ENCODE measurements at regions of chr9 and their contacts with region 1.

Region 1: GRCh38 chr9:5582835-5583195 is 46.1 kb upstream of the RIC1 start:
- DNase-seq: no peak
- H3K4me3 ChIP-seq: no peak overlapping the region
- H3K27ac ChIP-seq: no peak overlapping the region
- H3K4me1 ChIP-seq: no peaks in the 10 kb centered on the region
- H3K27me3 ChIP-seq: no peaks in the 10 kb centered on the region
- CTCF ChIP-seq: no peak
- EP300 ChIP-seq: no peak
- POLR2A ChIP-seq: no peak

Region 2: GRCh38 chr9:5321058-5321457 is 261.8 kb before region 1 on chr9:
- in situ Hi-C with region 1: loop called in 1 of 4 experiments (anchors 25 kb)
- intact Hi-C with region 1: no loop called
- DNase-seq: no peak
- H3K4me3 ChIP-seq: no peak overlapping the region
- H3K27ac ChIP-seq: no peak overlapping the region
- H3K4me1 ChIP-seq: no peaks in the 10 kb centered on the region
- H3K27me3 ChIP-seq: no peaks in the 10 kb centered on the region
- CTCF ChIP-seq: no peak
- EP300 ChIP-seq: no peak
- POLR2A ChIP-seq: no peak